ENCODE measurements at regions of chr4 and their contacts with region 1.

Region 1: GRCh38 chr4:154838694-154839093 is 57.6 kb downstream of the RBM46 start:
- DNase-seq: no peak
- H3K4me3 ChIP-seq: no peak overlapping the region
- H3K27ac ChIP-seq: no peak overlapping the region
- H3K4me1 ChIP-seq: no peaks in the 10 kb centered on the region
- H3K27me3 ChIP-seq: no peaks in the 10 kb centered on the region
- CTCF ChIP-seq: no peak

Region 2: GRCh38 chr4:154491341-154492271 is 347.1 kb before region 1 on chr4 and contains the start of gene DCHS2:
- CTCF ChIA-PET with region 1: no interaction called
- POLR2A ChIA-PET with region 1: no interaction called
- intact Hi-C with region 1: no loop called
- DNase-seq: peak in 1 of 2 experiments; percentile 14
- H3K4me3 ChIP-seq: no peak within 1 kb of the TSS
- H3K27ac ChIP-seq: no peak within 1 kb of the TSS
- H3K4me1 ChIP-seq: no peaks in the 10 kb centered on the region
- H3K27me3 ChIP-seq: no peaks in the 10 kb centered on the region
- CTCF ChIP-seq: no peak
- total RNA-seq, gene DCHS2: 0.02 and 0.15 TPM in 2 replicates

Region 3: DNA sequence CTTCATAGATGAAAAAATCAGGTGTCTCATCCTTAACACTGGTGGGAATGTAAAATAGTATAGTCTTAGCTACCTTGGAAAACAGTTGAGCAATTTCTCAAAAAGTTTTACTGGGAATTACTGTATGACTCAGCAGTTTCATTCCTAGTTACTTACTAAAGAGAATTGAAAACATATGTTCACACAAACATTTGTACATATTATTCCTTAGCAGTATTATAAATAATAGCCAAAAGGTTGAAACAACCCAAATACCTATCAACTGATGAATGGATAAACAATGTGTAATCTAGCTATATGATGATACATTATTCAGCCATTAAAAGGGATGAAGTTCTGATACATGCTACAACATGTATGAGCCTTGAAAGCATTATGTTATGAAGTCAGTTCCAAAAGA is 15.9 kb before region 1 on chr4:
- CTCF ChIA-PET with region 1: interaction called, 12 read pairs
- POLR2A ChIA-PET with region 1: no interaction called
- intact Hi-C with region 1: no loop called
- DNase-seq: no peak
- H3K4me3 ChIP-seq: no peak overlapping the region
- H3K27ac ChIP-seq: no peak overlapping the region
- H3K4me1 ChIP-seq: no peaks in the 10 kb centered on the region
- H3K27me3 ChIP-seq: no peaks in the 10 kb centered on the region
- CTCF ChIP-seq: no peak